ENCODE measurements at regions of chr1 and their contacts with region 1.

Region 1: GRCh38 chr1:169601093-169601881 is 15.0 kb upstream of the F5 start:
- DNase-seq: peak in 2 of 5 donors; percentile 19 to 39
- H3K4me3 ChIP-seq: no peak overlapping the region
- H3K4me3 Mint-ChIP-seq: peak overlapping the region in 1 of 7 donors; percentile 16
- H3K27ac ChIP-seq: no peak overlapping the region
- H3K27ac Mint-ChIP-seq: peak overlapping the region; percentile 0 to 43 (median 29)
- H3K4me1 ChIP-seq: peaks cover 50% of the 10 kb centered on the region
- H3K4me1 Mint-ChIP-seq: peaks cover 49 to 54% (median 51%) of the 10 kb centered on the region in 3 donors
- H3K27me3 ChIP-seq: no peaks in the 10 kb centered on the region
- H3K27me3 Mint-ChIP-seq: peaks cover 2 to 7% of the 10 kb centered on the region in 2 donors

Region 2: GRCh38 chr1:169546087-169546995 is 54.9 kb before region 1 on chr1:
- CTCF ChIA-PET with region 1: interaction called, 13 read pairs
- POLR2A ChIA-PET with region 1: no interaction called
- DNase-seq: peak; percentile 12 to 68 (median 60)
- H3K4me3 ChIP-seq: no peak overlapping the region
- H3K4me3 Mint-ChIP-seq: no peak overlapping the region
- H3K27ac ChIP-seq: no peak overlapping the region
- H3K27ac Mint-ChIP-seq: peak overlapping the region in 1 of 8 donors; percentile 34
- H3K4me1 ChIP-seq: no peaks in the 10 kb centered on the region
- H3K4me1 Mint-ChIP-seq: no peaks in the 10 kb centered on the region
- H3K27me3 ChIP-seq: no peaks in the 10 kb centered on the region
- H3K27me3 Mint-ChIP-seq: peaks cover 2 to 12% of the 10 kb centered on the region in 2 donors

Region 3: GRCh38 chr1:169586395-169587255 is 14.7 kb before region 1 on chr1 and contains the start of gene F5:
- CTCF ChIA-PET with region 1: interaction called, 15 read pairs
- POLR2A ChIA-PET with region 1: no interaction called
- DNase-seq: peak; percentile 50 to 78 (median 62)
- H3K4me3 ChIP-seq: no peak within 1 kb of the TSS
- H3K4me3 Mint-ChIP-seq: peak within 1 kb of the TSS; percentile 21 to 83 (median 67)
- H3K27ac ChIP-seq: no peak within 1 kb of the TSS
- H3K27ac Mint-ChIP-seq: peak within 1 kb of the TSS in 5 of 8 donors; percentile 43 to 87 (median 52)
- H3K4me1 ChIP-seq: peaks cover 19% of the 10 kb centered on the region
- H3K4me1 Mint-ChIP-seq: peaks cover 14 to 35% (median 26%) of the 10 kb centered on the region in 3 donors
- H3K27me3 ChIP-seq: peaks cover 5% of the 10 kb centered on the region
- H3K27me3 Mint-ChIP-seq: peaks cover 20 to 38% of the 10 kb centered on the region in 2 donors
- total RNA-seq, gene F5: 72.2 to 76.5 TPM

Region 4: GRCh38 chr1:169624912-169625311 is 23.6 kb after region 1 on chr1:
- CTCF ChIA-PET with region 1: no interaction called
- POLR2A ChIA-PET with region 1: no interaction called
- DNase-seq: no peak
- H3K4me3 ChIP-seq: no peak overlapping the region
- H3K4me3 Mint-ChIP-seq: no peak overlapping the region
- H3K27ac ChIP-seq: no peak overlapping the region
- H3K27ac Mint-ChIP-seq: peak overlapping the region in 1 of 8 donors; percentile 44
- H3K4me1 ChIP-seq: peaks cover 63% of the 10 kb centered on the region
- H3K4me1 Mint-ChIP-seq: peaks cover 38 to 64% (median 39%) of the 10 kb centered on the region in 3 donors
- H3K27me3 ChIP-seq: no peaks in the 10 kb centered on the region
- H3K27me3 Mint-ChIP-seq: peaks cover 2 to 17% of the 10 kb centered on the region in 2 donors

Region 5: DNA sequence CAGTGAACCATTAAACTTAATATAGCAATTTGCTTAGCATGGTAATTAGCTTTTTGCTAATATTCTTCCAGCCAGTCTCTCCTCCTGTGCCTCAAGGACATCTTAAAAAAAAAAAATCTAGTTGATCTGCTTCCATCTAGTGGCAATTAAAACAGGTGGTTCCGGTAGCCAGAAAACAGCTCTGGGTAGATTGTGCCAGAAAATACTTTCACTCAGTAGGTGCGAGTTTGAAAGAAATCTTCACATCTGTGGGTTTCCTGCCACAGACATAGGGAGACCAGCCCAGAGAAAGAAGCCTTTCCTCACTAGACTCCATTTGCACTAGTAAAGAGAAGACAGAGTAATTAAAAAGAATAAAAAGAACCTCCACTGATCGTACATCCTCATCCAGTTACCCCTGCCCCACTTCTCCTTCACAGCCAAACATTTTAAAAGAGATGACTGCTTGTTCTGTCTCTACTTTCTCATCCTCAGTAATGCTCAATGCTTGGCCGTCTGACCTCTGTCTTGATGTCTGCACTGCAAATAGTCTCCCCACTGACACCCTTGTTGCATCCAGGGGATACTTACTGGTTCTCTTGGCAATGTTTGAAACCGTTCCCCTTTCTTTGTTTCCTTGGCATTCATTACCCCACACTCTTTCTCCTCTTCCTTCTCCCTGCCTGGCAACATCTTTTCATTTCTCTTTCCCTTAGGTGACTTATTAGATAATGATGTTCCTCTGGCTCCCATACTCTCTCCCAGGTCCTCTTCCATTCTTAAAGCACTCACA is 93.2 kb after region 1 on chr1:
- CTCF ChIA-PET with region 1: interaction called, 42 read pairs
- POLR2A ChIA-PET with region 1: interaction called, 9 read pairs
- DNase-seq: peak in 4 of 5 donors; percentile 16 to 78 (median 70)
- H3K4me3 ChIP-seq: peak overlapping the region; percentile 33
- H3K4me3 Mint-ChIP-seq: peak overlapping the region; percentile 53 to 76 (median 69)
- H3K27ac ChIP-seq: no peak overlapping the region
- H3K27ac Mint-ChIP-seq: peak overlapping the region; percentile 69 to 98 (median 86)
- H3K4me1 ChIP-seq: peaks cover 99% of the 10 kb centered on the region
- H3K4me1 Mint-ChIP-seq: peaks cover 72 to 92% (median 73%) of the 10 kb centered on the region in 3 donors
- H3K27me3 ChIP-seq: no peaks in the 10 kb centered on the region
- H3K27me3 Mint-ChIP-seq: no peaks in the 10 kb centered on the region

Region 6: GRCh38 chr1:169809370-169810095 is 208.2 kb after region 1 on chr1:
- CTCF ChIA-PET with region 1: interaction called, 10 read pairs
- POLR2A ChIA-PET with region 1: no interaction called
- DNase-seq: peak in 3 of 5 donors; percentile 1 to 23 (median 10)
- H3K4me3 ChIP-seq: no peak overlapping the region
- H3K4me3 Mint-ChIP-seq: no peak overlapping the region
- H3K27ac ChIP-seq: no peak overlapping the region
- H3K27ac Mint-ChIP-seq: peak overlapping the region in 1 of 8 donors; percentile 42
- H3K4me1 ChIP-seq: peaks cover 7% of the 10 kb centered on the region
- H3K4me1 Mint-ChIP-seq: peaks cover 3 to 8% (median 4%) of the 10 kb centered on the region in 3 donors
- H3K27me3 ChIP-seq: no peaks in the 10 kb centered on the region
- H3K27me3 Mint-ChIP-seq: no peaks in the 10 kb centered on the region

Measured in CD8-positive, alpha-beta memory T cell (primary cell).